ENCODE measurements at regions of chr12 and their contacts with region 1.

Region 1: DNA sequence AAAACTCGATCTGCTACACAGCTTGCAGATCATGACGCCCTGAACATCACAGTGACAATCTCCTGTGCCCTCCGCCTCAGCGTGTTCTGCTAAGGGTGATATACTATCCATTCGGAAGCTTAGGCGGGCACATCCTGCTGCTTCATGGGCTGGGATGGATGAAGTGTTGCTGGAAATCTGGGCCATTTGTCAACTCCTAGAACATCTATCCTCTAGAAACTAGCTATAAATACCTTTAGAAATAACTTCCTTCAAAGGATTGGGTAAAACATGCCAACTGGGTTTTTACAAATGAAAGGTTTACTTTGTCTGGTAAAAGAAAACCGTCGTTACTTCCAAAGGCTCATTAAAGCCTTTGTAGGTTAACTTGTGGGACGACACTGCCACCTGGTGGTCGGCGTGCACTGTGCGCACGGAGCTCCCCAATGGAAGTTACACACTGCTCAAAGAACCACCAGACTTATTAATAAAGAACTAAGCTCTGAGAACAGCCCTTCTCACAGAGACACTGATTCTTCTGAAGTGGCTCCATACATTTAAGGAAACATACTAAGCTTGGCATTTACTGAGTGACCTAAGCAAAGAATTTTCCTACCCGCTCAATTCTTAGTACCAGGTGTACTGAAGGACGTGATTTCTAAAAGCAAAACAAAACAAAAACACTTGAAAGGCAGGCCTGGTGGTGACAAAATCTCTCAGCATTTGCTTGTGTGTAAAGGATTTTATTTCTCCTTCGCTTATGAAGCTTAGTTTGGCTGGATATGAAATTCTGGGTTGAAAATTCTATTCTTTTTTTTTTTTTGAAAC is 21.6 kb upstream of the CACNA2D4 start:
- DNase-seq: peak; percentile 96
- H3K4me3 Mint-ChIP-seq: no peak overlapping the region
- H3K27ac Mint-ChIP-seq: no peak overlapping the region
- H3K4me1 Mint-ChIP-seq: peaks cover 4% of the 10 kb centered on the region
- H3K27me3 Mint-ChIP-seq: no peaks in the 10 kb centered on the region

Region 2: GRCh38 chr12:1634590-1635191 is 305.3 kb before region 1 on chr12:
- intact Hi-C with region 1: loop called (anchors 1 kb)
- DNase-seq: peak; percentile 87
- H3K4me3 Mint-ChIP-seq: no peak overlapping the region
- H3K27ac Mint-ChIP-seq: no peak overlapping the region
- H3K4me1 Mint-ChIP-seq: peaks cover 8% of the 10 kb centered on the region
- H3K27me3 Mint-ChIP-seq: peaks cover 53% of the 10 kb centered on the region

Region 3: GRCh38 chr12:1650260-1650977 is 289.6 kb before region 1 on chr12:
- intact Hi-C with region 1: loop called (anchors 1 kb)
- DNase-seq: no peak
- H3K4me3 Mint-ChIP-seq: no peak overlapping the region
- H3K27ac Mint-ChIP-seq: no peak overlapping the region
- H3K4me1 Mint-ChIP-seq: peaks cover 5% of the 10 kb centered on the region
- H3K27me3 Mint-ChIP-seq: peaks cover 40% of the 10 kb centered on the region